SK-N-SH (cell line): ENCODE measurements at regions of chr1 and their contacts with region 1.

Region 1: GRCh38 chr1:62746085-62746808 is 37.7 kb upstream of the ATG4C start:
- DNase-seq: peak; percentile 56
- H3K4me3 ChIP-seq: no peak overlapping the region; a peak in 1 of 4 replicates
- H3K27ac ChIP-seq: no peak overlapping the region
- H3K4me1 ChIP-seq: no peaks in the 10 kb centered on the region
- H3K27me3 ChIP-seq: no peaks in the 10 kb centered on the region
- CTCF ChIP-seq: peak; percentile 81
- EP300 ChIP-seq: no peak
- RAD21 ChIP-seq: peak; percentile 92

Region 2: DNA sequence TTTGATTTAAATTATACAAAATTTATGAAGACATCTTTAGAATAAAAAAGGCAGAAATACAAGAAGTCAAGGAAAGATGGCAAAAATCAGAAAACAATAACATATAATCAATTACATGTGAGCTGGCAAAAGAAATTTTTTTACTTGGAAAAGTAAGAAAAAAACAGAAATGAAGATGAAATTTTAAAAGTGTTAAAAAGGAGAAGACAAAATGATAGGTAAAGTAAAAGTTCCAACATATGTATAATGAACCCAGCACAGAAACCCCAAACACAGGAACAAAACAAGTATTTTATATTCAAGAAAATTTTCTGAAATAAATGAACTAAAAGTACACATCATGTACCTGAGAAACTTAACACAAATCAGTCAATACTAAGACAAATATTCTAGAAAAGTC is 246.0 kb before region 1 on chr1:
- CTCF ChIA-PET with region 1: interaction called, 121 read pairs
- POLR2A ChIA-PET with region 1: no interaction called
- DNase-seq: no peak
- H3K4me3 ChIP-seq: no peak overlapping the region
- H3K27ac ChIP-seq: no peak overlapping the region
- H3K4me1 ChIP-seq: no peaks in the 10 kb centered on the region; a peak in 1 of 4 replicates
- H3K27me3 ChIP-seq: no peaks in the 10 kb centered on the region
- CTCF ChIP-seq: no peak
- EP300 ChIP-seq: no peak
- RAD21 ChIP-seq: no peak

Region 3: GRCh38 chr1:62514746-62515423 is 231.4 kb before region 1 on chr1:
- CTCF ChIA-PET with region 1: interaction called, 121 read pairs
- POLR2A ChIA-PET with region 1: no interaction called
- DNase-seq: no peak
- H3K4me3 ChIP-seq: no peak overlapping the region
- H3K27ac ChIP-seq: no peak overlapping the region
- H3K4me1 ChIP-seq: peaks cover 0 to 3% of the 10 kb centered on the region in 2 experiments; a peak in 2 of 4 replicates
- H3K27me3 ChIP-seq: no peaks in the 10 kb centered on the region
- CTCF ChIP-seq: no peak
- EP300 ChIP-seq: no peak
- RAD21 ChIP-seq: no peak

Region 4: DNA sequence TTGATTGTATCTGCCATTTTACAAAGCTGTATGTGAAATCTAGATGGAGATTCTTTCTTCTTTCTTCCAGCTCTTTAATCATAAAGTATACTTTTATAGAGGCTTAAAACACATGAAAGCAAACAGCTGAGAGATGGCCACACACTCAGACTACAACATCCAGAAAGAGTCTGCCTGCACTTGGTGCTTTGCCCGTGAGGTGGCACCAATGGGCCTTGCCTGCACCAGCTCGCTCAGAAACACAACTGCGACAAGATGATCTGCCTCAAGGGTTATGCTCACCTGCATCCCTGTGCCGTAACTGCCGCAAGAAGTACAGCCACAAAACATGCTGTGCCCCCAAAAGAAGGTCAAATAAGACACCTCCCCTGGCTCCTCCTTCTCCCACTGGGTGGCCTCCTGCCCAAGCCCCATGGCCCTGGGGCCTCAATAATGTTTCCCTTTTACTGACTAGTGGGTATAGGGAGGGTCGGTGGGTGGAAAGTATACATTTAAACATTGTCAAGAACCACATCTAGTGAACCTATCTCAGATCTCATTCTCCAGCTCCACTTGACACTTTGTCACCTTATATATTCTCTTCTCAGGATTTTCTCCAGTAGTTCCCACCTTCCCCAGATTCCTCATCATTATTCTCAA is 215.6 kb before region 1 on chr1:
- CTCF ChIA-PET with region 1: interaction called, 24 read pairs
- POLR2A ChIA-PET with region 1: no interaction called
- DNase-seq: peak; percentile 11
- H3K4me3 ChIP-seq: no peak overlapping the region
- H3K27ac ChIP-seq: no peak overlapping the region
- H3K4me1 ChIP-seq: no peaks in the 10 kb centered on the region
- H3K27me3 ChIP-seq: no peaks in the 10 kb centered on the region
- CTCF ChIP-seq: peak; percentile 60
- EP300 ChIP-seq: no peak
- RAD21 ChIP-seq: peak; percentile 68

Region 5: DNA sequence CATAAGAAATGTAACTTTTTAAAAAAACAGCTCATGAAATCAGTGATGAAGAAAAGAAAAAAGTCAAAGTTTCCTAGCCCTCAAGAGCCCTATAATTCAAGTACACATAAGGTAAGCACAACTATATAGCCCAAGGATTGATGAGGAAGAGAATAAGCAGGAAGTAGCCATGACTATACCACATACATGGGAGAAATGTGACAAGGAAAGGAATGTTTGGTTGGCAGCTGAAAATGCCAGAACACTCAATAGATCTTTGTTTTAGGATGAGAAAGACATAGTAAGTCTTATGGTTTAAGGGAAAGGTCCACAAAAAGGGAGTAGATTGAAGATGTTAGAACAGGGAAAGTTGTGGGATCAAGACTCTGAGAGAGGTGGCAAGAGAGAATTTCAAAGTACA is 63.7 kb before region 1 on chr1:
- CTCF ChIA-PET with region 1: no interaction called
- POLR2A ChIA-PET with region 1: no interaction called
- DNase-seq: no peak
- H3K4me3 ChIP-seq: no peak overlapping the region
- H3K27ac ChIP-seq: peak overlapping the region in 1 of 2 experiments; percentile 52; a peak in 2 of 4 replicates
- H3K4me1 ChIP-seq: peaks cover 15% of the 10 kb centered on the region in 2 experiments
- H3K27me3 ChIP-seq: no peaks in the 10 kb centered on the region
- CTCF ChIP-seq: no peak
- EP300 ChIP-seq: no peak
- RAD21 ChIP-seq: no peak

Region 6: DNA sequence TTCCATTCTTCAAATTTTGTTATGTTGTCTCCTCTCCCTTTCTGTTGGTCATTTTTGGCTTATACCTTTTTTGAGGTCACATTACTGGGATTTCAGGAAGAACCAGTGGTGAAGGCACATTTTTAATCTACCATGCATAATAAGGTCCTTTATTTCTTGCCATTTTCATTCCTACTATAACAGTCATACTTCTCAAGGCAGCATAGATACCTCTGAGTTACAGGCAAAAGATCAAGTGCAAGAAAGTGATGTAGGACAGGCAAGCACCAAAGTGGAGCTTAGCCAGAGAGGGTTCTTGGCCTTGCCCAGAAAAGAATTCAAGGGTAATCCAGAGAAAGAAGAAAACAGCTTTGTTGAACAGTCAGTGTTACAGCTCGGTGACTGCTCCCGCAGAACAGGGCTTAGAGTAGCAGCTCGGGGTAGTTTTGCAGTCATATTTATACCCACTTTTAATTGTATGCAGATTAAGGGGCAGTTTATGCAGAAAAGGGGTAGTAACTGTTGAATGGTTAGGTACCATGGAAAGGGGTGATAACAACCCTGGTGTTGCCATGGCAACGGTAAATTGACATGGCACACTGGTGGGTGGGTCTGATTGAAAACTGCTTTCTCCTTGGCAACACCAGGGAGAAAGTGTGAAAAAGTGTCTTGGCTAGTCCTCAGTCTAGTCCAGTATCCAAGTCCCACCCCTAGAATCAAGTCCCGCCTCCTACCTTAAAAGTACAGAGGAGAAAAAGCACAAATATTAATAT is 18.4 kb before region 1 on chr1:
- CTCF ChIA-PET with region 1: interaction called, 48 read pairs
- POLR2A ChIA-PET with region 1: no interaction called
- DNase-seq: no peak
- H3K4me3 ChIP-seq: no peak overlapping the region
- H3K27ac ChIP-seq: peak overlapping the region in 1 of 2 experiments; percentile 33; a peak in 2 of 4 replicates
- H3K4me1 ChIP-seq: peaks cover 9 to 26% of the 10 kb centered on the region in 2 experiments; a peak in 3 of 4 replicates
- H3K27me3 ChIP-seq: no peaks in the 10 kb centered on the region
- CTCF ChIP-seq: no peak
- EP300 ChIP-seq: no peak
- RAD21 ChIP-seq: no peak

Region 7: GRCh38 chr1:62735491-62736171 is 10.6 kb before region 1 on chr1:
- CTCF ChIA-PET with region 1: interaction called, 48 read pairs
- POLR2A ChIA-PET with region 1: no interaction called
- DNase-seq: no peak
- H3K4me3 ChIP-seq: no peak overlapping the region
- H3K27ac ChIP-seq: peak overlapping the region; percentile 50 to 68; a peak in 3 of 4 replicates
- H3K4me1 ChIP-seq: peaks cover 0 to 11% of the 10 kb centered on the region in 2 experiments; a peak in 1 of 4 replicates
- H3K27me3 ChIP-seq: no peaks in the 10 kb centered on the region
- CTCF ChIP-seq: no peak
- EP300 ChIP-seq: peak in 1 of 2 experiments; percentile 25; a peak in 1 of 4 replicates
- RAD21 ChIP-seq: no peak

Region 8: DNA sequence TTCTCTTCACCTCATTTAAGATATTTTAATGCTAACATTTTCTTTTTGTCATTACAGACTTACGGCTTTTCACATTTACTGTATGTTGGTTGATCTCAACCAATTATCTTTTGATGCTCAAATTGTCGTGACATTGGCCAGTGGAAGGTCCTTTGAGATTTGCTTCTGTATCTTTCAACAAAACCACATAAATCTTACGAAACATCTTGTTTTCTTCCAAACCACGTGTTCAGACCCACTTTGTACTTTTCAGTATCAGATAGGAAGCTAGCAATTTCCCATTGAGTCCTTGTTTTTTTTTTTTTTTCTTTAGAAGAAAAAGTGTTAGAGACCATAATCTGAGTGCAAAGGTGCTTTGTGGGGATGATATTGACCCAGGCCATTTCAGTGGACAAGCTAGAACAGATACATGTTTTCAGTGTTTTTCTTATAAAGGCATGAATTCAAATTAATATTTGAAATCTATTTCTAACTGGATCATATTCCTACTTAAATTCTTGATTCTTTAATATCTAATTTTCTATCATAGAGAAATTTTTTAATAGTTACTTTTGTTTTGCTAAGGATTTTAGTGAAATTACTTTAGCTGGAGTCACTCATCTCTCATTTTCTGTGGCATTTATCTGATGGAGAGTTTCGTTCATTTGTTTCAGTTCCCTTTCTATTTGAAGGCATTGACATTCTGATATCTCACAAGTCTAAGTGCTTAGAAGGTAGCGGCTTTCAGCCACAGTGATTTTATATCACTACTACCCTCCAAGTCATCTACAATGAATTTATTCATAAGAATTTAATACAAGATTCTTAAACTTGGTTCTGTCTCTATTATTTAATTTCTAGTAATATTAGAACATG is 64.4 kb after region 1 on chr1:
- CTCF ChIA-PET with region 1: no interaction called
- POLR2A ChIA-PET with region 1: no interaction called
- DNase-seq: no peak
- H3K4me3 ChIP-seq: no peak overlapping the region
- H3K27ac ChIP-seq: no peak overlapping the region
- H3K4me1 ChIP-seq: no peaks in the 10 kb centered on the region
- H3K27me3 ChIP-seq: no peaks in the 10 kb centered on the region
- CTCF ChIP-seq: no peak
- EP300 ChIP-seq: no peak
- RAD21 ChIP-seq: no peak